SK-N-SH (cell line): ENCODE measurements at regions of chr15 and their contacts with region 1.

Region 1: DNA sequence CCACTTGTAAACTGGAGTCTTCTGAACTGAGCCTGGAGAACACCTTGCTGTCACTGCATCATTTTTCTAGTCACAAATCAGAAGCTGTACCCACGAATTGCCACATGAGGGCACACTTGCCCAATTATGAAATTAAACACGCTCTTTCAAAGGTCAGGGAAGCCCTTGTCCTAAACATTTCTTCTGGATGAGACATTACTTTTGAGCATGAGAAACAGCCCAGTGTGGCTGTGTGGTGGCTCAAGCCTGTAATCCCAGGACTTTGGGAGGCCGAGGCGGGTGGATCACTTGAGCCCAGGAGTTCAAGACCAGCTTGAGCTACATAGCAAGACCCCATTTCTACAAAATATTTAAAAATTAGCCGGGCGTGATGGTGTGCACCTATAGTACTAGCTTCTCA is 27.5 kb upstream of the CFAP161 start:
- DNase-seq: peak; percentile 70
- H3K4me3 ChIP-seq: no peak overlapping the region; a peak in 1 of 4 replicates
- H3K27ac ChIP-seq: no peak overlapping the region
- H3K4me1 ChIP-seq: no peaks in the 10 kb centered on the region
- H3K27me3 ChIP-seq: peaks cover 5% of the 10 kb centered on the region; the same call in 1 of the 2 replicates
- CTCF ChIP-seq: peak; percentile 81
- EP300 ChIP-seq: no peak
- RAD21 ChIP-seq: peak; percentile 94

Region 2: GRCh38 chr15:80932989-80933388 is 173.6 kb before region 1 on chr15:
- CTCF ChIA-PET with region 1: no interaction called
- POLR2A ChIA-PET with region 1: no interaction called
- DNase-seq: no peak
- H3K4me3 ChIP-seq: no peak overlapping the region
- H3K27ac ChIP-seq: no peak overlapping the region
- H3K4me1 ChIP-seq: peaks cover 0 to 3% of the 10 kb centered on the region in 2 experiments; a peak in 1 of 4 replicates
- H3K27me3 ChIP-seq: no peaks in the 10 kb centered on the region
- CTCF ChIP-seq: no peak
- EP300 ChIP-seq: no peak
- RAD21 ChIP-seq: no peak

Region 3: GRCh38 chr15:81117136-81117535 is 10.6 kb after region 1 on chr15:
- CTCF ChIA-PET with region 1: interaction called, 12 read pairs
- POLR2A ChIA-PET with region 1: no interaction called
- DNase-seq: no peak
- H3K4me3 ChIP-seq: no peak overlapping the region
- H3K27ac ChIP-seq: no peak overlapping the region
- H3K4me1 ChIP-seq: no peaks in the 10 kb centered on the region; a peak in 1 of 4 replicates
- H3K27me3 ChIP-seq: no peaks in the 10 kb centered on the region; the same call in 1 of the 2 replicates
- CTCF ChIP-seq: no peak
- EP300 ChIP-seq: no peak
- RAD21 ChIP-seq: no peak

Region 4: DNA sequence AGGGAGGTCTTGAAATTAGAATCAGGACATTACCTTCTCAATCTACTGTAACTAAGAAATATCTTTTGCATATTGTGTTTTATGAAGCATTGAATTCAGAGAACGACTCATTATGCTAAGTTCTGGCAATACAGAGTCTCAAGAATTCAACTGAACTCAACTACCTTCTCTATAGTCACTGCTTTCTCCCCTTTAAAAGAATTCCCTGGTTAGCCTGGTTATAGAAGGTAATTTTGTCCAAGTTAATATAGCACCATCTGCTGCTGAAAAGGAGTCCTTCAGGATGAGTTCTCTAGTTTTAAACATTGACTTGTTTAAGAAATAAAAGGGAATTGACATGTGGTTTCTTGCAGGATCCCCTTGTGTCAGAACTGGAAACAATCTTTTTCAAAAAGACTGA is 150.4 kb after region 1 on chr15:
- CTCF ChIA-PET with region 1: interaction called, 33 read pairs
- POLR2A ChIA-PET with region 1: no interaction called
- DNase-seq: peak; percentile 24
- H3K4me3 ChIP-seq: no peak overlapping the region
- H3K27ac ChIP-seq: no peak overlapping the region
- H3K4me1 ChIP-seq: no peaks in the 10 kb centered on the region
- H3K27me3 ChIP-seq: peaks cover 12% of the 10 kb centered on the region; the same call in 1 of the 2 replicates
- CTCF ChIP-seq: peak; percentile 58
- EP300 ChIP-seq: no peak
- RAD21 ChIP-seq: peak; percentile 66